ENCODE measurements at regions of chr17 and their contacts with region 1.

Region 1: GRCh38 chr17:80663781-80664206 is 119.2 kb downstream of the RPTOR start:
- DNase-seq: peak in 8 of 9 experiments; percentile 9 to 71 (median 48)
- ATAC-seq: peak; percentile 60
- H3K4me3 ChIP-seq: peak overlapping the region in 1 of 2 experiments; percentile 50
- H3K4me3 Mint-ChIP-seq: peak overlapping the region; percentile 64
- H3K27ac ChIP-seq: peak overlapping the region; percentile 28 to 71
- H3K27ac Mint-ChIP-seq: peak overlapping the region; percentile 98
- H3K4me1 ChIP-seq: peaks cover 56% of the 10 kb centered on the region
- H3K4me1 Mint-ChIP-seq: peaks cover 69% of the 10 kb centered on the region
- H3K27me3 ChIP-seq: no peaks in the 10 kb centered on the region
- H3K27me3 Mint-ChIP-seq: no peaks in the 10 kb centered on the region
- CTCF ChIP-seq: no peak

Region 2: DNA sequence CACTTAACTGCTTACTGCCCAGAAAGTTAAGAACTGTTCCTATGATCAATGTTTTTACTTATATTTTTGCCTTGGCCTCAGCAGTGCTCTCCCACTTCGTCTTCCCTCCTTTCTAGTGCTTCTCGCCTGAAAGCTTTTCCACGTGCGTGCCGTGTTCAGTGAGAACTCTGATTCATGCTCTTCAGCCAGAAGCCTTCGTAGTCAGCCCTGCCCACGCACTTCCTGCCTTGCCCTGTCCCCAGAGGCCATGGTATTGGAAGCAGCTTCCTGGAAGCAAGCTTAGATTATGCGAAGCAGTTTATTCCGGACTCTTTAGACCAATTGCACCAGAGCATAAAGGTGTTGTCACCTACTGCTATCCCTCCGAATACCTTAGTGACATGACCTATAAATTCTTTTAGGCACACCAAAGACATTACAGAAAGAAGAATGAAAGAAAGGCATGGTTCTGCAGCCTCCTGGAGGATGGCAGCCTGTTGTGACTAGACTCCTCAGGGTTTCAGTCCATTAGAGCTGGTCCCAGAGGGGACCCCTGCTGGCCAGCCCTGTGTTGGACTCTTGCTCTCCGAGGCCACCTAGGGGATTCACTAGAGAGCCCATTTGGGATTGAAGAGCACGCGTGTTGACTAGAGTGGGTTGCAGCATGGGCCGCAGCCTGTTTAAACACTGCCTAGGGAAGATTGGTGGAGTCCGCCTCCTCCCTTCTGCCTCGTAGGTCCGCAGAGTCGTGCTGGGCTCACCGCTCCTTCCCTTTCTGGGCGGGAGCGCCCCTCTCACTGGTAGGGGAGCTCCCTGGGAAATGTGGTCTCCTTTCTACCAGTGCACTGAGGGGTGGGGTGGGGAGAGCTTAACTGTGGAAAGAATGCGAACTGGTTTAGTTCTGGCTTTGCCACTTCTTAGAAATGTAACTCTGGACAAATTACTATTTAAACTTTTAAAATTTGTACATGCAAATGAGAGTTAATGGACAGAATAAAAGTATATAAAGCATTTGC is 13.8 kb before region 1 on chr17:
- CTCF ChIA-PET with region 1: interaction called, 4 read pairs
- POLR2A ChIA-PET with region 1: interaction called, 4 read pairs
- intact Hi-C with region 1: loop called in 1 of 2 experiments (anchors 1 kb)
- DNase-seq: peak in 8 of 9 experiments; percentile 38 to 69 (median 54)
- ATAC-seq: peak; percentile 90
- H3K4me3 ChIP-seq: peak overlapping the region in 1 of 2 experiments; percentile 8
- H3K4me3 Mint-ChIP-seq: peak overlapping the region; percentile 71
- H3K27ac ChIP-seq: peak overlapping the region in 1 of 2 experiments; percentile 1
- H3K27ac Mint-ChIP-seq: peak overlapping the region; percentile 94
- H3K4me1 ChIP-seq: peaks cover 46% of the 10 kb centered on the region
- H3K4me1 Mint-ChIP-seq: peaks cover 70% of the 10 kb centered on the region
- H3K27me3 ChIP-seq: no peaks in the 10 kb centered on the region
- H3K27me3 Mint-ChIP-seq: no peaks in the 10 kb centered on the region
- CTCF ChIP-seq: peak; percentile 35

Region 3: GRCh38 chr17:80704381-80704819 is 40.6 kb after region 1 on chr17:
- CTCF ChIA-PET with region 1: no interaction called
- POLR2A ChIA-PET with region 1: interaction called, 10 read pairs
- intact Hi-C with region 1: no loop called
- DNase-seq: no peak
- ATAC-seq: peak; percentile 14
- H3K4me3 ChIP-seq: no peak overlapping the region
- H3K4me3 Mint-ChIP-seq: no peak overlapping the region
- H3K27ac ChIP-seq: peak overlapping the region in 1 of 2 experiments; percentile 63
- H3K27ac Mint-ChIP-seq: peak overlapping the region; percentile 95
- H3K4me1 ChIP-seq: peaks cover 46% of the 10 kb centered on the region
- H3K4me1 Mint-ChIP-seq: peaks cover 78% of the 10 kb centered on the region
- H3K27me3 ChIP-seq: no peaks in the 10 kb centered on the region
- H3K27me3 Mint-ChIP-seq: no peaks in the 10 kb centered on the region
- CTCF ChIP-seq: no peak

Region 4: GRCh38 chr17:80737106-80738019 is 73.6 kb after region 1 on chr17:
- CTCF ChIA-PET with region 1: interaction called, 3 read pairs
- POLR2A ChIA-PET with region 1: no interaction called
- intact Hi-C with region 1: loop called in 1 of 2 experiments (anchors 2 kb)
- DNase-seq: no peak
- ATAC-seq: no peak
- H3K4me3 ChIP-seq: no peak overlapping the region
- H3K4me3 Mint-ChIP-seq: no peak overlapping the region
- H3K27ac ChIP-seq: no peak overlapping the region
- H3K27ac Mint-ChIP-seq: peak overlapping the region; percentile 95
- H3K4me1 ChIP-seq: peaks cover 48% of the 10 kb centered on the region
- H3K4me1 Mint-ChIP-seq: peaks cover 59% of the 10 kb centered on the region
- H3K27me3 ChIP-seq: no peaks in the 10 kb centered on the region
- H3K27me3 Mint-ChIP-seq: no peaks in the 10 kb centered on the region
- CTCF ChIP-seq: no peak

Region 5: DNA sequence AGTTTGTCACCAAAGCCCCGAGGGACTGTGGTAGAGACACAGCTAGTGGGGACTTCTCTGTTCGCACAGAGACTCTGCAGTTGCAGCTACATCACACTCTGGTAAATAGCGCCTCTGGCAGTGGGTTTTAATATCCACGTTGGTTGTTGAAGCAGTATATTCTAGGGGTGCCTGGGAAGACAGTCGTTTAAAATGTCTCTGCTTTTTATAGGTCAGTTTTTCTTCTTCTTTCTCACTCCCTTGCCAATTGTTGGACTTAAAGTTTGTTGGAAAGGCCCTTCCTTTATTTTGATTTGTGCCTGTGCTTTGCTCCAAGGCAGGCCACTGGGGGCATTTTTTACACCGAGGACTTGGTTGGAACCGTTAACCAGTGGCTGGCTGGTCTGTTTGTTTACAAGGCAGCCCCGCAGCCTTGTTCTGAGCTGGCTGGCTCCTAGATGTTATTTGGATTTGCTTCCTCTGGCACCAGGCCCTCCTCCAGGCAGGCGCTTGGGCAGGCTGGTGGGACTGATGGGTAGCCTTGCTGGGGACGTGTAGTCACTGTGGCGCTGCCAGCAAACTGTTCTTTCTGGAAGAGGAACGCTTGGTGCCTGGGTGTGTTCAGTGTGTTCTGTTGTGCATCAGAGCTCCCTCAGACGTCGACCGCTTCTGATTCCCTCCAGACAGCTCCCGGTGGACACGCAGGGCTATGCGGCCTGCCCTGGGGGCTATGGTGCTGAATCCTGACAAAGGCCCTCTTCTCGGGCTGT is 109.6 kb after region 1 on chr17:
- CTCF ChIA-PET with region 1: no interaction called
- POLR2A ChIA-PET with region 1: no interaction called
- intact Hi-C with region 1: loop called in 1 of 2 experiments (anchors 5 kb)
- DNase-seq: peak in 2 of 9 experiments; percentile 56 to 59
- ATAC-seq: peak; percentile 81
- H3K4me3 ChIP-seq: no peak overlapping the region
- H3K4me3 Mint-ChIP-seq: peak overlapping the region; percentile 75
- H3K27ac ChIP-seq: no peak overlapping the region
- H3K27ac Mint-ChIP-seq: peak overlapping the region; percentile 95
- H3K4me1 ChIP-seq: peaks cover 31% of the 10 kb centered on the region
- H3K4me1 Mint-ChIP-seq: peaks cover 61% of the 10 kb centered on the region
- H3K27me3 ChIP-seq: no peaks in the 10 kb centered on the region
- H3K27me3 Mint-ChIP-seq: no peaks in the 10 kb centered on the region
- CTCF ChIP-seq: no peak

Region 6: GRCh38 chr17:80780381-80781198 is 116.8 kb after region 1 on chr17:
- CTCF ChIA-PET with region 1: interaction called, 4 read pairs
- POLR2A ChIA-PET with region 1: no interaction called
- intact Hi-C with region 1: loop called in 1 of 2 experiments (anchors 2 kb)
- DNase-seq: peak in 5 of 9 experiments; percentile 27 to 65 (median 36)
- ATAC-seq: peak; percentile 58
- H3K4me3 ChIP-seq: peak overlapping the region; percentile 23 to 31
- H3K4me3 Mint-ChIP-seq: peak overlapping the region; percentile 79
- H3K27ac ChIP-seq: peak overlapping the region; percentile 13 to 83
- H3K27ac Mint-ChIP-seq: peak overlapping the region; percentile 91
- H3K4me1 ChIP-seq: peaks cover 56% of the 10 kb centered on the region
- H3K4me1 Mint-ChIP-seq: peaks cover 64% of the 10 kb centered on the region
- H3K27me3 ChIP-seq: no peaks in the 10 kb centered on the region
- H3K27me3 Mint-ChIP-seq: no peaks in the 10 kb centered on the region
- CTCF ChIP-seq: no peak

Region 7: GRCh38 chr17:80832888-80833583 is 169.2 kb after region 1 on chr17:
- CTCF ChIA-PET with region 1: interaction called, 3 read pairs
- POLR2A ChIA-PET with region 1: no interaction called
- intact Hi-C with region 1: loop called in 1 of 2 experiments (anchors 1 kb)
- DNase-seq: peak; percentile 30 to 89 (median 75)
- ATAC-seq: peak; percentile 92
- H3K4me3 ChIP-seq: peak overlapping the region; percentile 51 to 68
- H3K4me3 Mint-ChIP-seq: peak overlapping the region; percentile 92
- H3K27ac ChIP-seq: peak overlapping the region; percentile 77 to 84
- H3K27ac Mint-ChIP-seq: peak overlapping the region; percentile 96
- H3K4me1 ChIP-seq: peaks cover 19% of the 10 kb centered on the region
- H3K4me1 Mint-ChIP-seq: peaks cover 27% of the 10 kb centered on the region
- H3K27me3 ChIP-seq: no peaks in the 10 kb centered on the region
- H3K27me3 Mint-ChIP-seq: no peaks in the 10 kb centered on the region
- CTCF ChIP-seq: no peak

Measured in CD8-positive, alpha-beta T cell (primary cell).